ENCODE measurements at regions of chr12 and their contacts with region 1.

Region 1: DNA sequence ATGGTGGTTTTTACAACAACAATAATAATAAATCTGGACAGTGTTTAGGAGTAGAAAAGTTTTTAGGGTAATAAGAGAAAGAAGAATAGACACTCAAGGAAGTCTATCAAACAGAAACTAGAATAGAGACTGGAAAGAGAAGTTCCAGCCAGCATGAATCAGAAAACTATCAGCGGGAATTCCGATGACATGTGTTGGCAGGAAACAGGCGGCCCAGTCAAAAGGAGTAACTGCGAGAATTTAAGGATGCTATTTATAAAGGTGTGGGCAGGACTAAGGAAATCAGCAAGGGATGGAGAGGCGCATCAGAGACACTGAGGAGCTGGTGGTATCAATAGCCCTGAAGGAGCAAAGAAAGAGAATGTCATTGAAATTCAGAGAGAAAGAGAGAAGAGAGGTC is 89.9 kb downstream of the TBX5 start:
- DNase-seq: no peak
- H3K4me3 ChIP-seq: no peak overlapping the region
- H3K27ac ChIP-seq: no peak overlapping the region
- H3K4me1 ChIP-seq: no peaks in the 10 kb centered on the region
- H3K27me3 ChIP-seq: no peaks in the 10 kb centered on the region
- CTCF ChIP-seq: no peak

Region 2: DNA sequence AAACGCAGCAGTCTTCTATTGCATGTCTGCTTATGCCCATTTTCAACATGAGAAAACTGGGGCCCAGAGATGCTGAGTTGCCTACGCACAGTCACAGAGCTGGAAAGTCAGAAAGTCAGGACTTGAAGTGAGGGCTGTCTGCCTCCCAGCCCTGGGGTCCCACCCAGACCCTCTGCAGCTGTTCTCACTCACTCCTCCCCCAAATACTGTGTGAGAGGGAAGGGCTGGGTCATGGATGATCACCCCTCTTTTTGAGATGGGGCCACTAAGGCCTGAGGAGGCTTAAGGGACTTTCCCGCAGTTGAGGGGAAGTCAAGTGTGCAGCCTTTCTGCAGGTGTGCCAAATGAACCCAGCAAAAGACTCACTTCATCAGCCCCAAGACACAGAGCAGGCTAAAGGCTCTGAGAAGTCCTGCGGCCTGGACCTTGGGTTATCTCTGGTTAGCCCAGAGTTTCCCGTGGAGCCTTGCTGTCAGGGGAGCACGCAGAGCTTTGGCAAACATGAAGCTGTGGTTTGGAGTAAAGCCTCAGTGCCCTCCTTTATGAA is 1240.9 kb before region 1 on chr12:
- CTCF ChIA-PET with region 1: no interaction called
- POLR2A ChIA-PET with region 1: interaction called, 10 read pairs
- intact Hi-C with region 1: no loop called
- DNase-seq: no peak
- H3K4me3 ChIP-seq: no peak overlapping the region
- H3K27ac ChIP-seq: no peak overlapping the region
- H3K4me1 ChIP-seq: no peaks in the 10 kb centered on the region
- H3K27me3 ChIP-seq: no peaks in the 10 kb centered on the region
- CTCF ChIP-seq: no peak